Activated T-helper 1 cell treated with anti-CD3 and anti-CD28 coated beads, Interleukin-12 subunit alpha, Interleukin-12 subunit beta, Interleukin-2, Interleukin-4 antibody, amounts not matched to agents 30 ng/mL and 10 ng/mL and 1 ng/mL, durations not matched to agents 14 hours and 24 hours and 36 hours (primary cell): ENCODE measurements at regions of chr12 and their contacts with region 1.

Region 1: DNA sequence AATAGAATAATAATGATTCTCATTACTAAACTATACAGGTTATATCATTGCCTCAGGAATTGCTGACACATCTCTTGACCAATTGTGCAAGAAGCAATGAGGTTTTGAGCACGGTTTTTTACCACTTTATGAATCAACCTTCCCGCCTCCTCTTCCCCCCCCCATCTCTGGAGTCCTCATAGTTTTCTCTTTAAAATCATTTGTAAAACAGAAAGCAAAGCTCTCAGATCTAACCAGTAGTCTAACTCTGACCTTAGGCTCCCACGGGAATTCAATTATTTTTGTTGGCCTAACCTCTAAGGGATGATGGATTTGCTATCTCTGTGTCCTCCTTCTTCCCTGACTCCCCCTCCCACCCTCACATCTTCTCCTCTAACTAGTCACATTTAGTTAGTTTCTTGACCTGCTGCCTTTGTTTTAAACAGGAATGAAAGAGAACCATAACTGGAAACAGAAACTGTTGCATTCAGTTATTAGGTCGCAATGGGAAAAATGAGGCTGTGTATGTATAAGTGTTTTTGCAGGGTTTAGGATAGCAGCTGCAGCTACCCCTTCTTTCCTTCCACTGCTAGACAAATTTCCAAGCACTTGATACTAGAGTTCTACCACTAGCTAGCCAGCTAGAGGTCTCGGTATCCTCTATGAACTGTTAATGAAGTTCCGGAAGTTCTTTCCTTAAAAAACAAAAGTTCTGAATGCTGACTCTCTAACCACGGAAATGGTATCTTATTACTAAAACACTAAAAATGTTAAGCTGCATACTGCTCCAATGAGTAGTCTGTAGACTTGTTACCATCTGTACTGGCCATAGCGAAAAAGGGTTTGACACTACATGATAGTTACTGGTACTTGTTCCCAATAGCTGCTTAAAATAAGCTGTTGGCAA is 65.4 kb downstream of the TAOK3 start:
- DNase-seq: peak; percentile 2
- H3K4me3 Mint-ChIP-seq: peak overlapping the region; percentile 70
- H3K27ac Mint-ChIP-seq: peak overlapping the region; percentile 62
- H3K4me1 Mint-ChIP-seq: peaks cover 33% of the 10 kb centered on the region
- H3K27me3 Mint-ChIP-seq: no peaks in the 10 kb centered on the region

Region 2: DNA sequence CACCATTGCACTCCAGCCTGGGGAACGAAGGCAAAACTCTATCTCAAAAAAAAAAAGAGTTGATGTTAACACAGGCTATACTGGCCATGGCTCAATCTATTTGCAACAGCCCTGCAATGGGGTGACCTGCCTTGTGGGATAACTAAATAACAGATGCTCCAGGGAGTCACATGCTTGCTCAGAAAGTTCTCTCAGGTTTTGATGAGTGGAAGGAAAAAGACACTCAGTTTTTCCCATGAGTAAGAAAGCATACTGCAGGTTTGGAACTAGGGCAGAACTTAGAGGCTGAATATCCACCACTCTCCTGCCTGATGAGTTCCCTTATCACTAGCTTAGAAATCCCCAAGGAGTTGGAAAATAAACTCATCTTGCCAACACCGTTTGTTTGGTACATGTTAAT is 263.2 kb before region 1 on chr12:
- intact Hi-C with region 1: loop called (anchors 10 kb)
- DNase-seq: no peak
- H3K4me3 Mint-ChIP-seq: peak overlapping the region; percentile 72
- H3K27ac Mint-ChIP-seq: peak overlapping the region; percentile 95
- H3K4me1 Mint-ChIP-seq: peaks cover 47% of the 10 kb centered on the region
- H3K27me3 Mint-ChIP-seq: no peaks in the 10 kb centered on the region